Endothelial cell of umbilical vein (primary cell): ENCODE measurements at regions of chr18 and their contacts with region 1.

Region 1: GRCh38 chr18:59938676-59939075 is 38.9 kb downstream of the PMAIP1 start:
- DNase-seq: no peak
- H3K4me3 ChIP-seq: no peak overlapping the region
- H3K27ac ChIP-seq: no peak overlapping the region
- H3K4me1 ChIP-seq: no peaks in the 10 kb centered on the region
- H3K27me3 ChIP-seq: no peaks in the 10 kb centered on the region
- CTCF ChIP-seq: no peak
- POLR2A ChIP-seq: no peak

Region 2: DNA sequence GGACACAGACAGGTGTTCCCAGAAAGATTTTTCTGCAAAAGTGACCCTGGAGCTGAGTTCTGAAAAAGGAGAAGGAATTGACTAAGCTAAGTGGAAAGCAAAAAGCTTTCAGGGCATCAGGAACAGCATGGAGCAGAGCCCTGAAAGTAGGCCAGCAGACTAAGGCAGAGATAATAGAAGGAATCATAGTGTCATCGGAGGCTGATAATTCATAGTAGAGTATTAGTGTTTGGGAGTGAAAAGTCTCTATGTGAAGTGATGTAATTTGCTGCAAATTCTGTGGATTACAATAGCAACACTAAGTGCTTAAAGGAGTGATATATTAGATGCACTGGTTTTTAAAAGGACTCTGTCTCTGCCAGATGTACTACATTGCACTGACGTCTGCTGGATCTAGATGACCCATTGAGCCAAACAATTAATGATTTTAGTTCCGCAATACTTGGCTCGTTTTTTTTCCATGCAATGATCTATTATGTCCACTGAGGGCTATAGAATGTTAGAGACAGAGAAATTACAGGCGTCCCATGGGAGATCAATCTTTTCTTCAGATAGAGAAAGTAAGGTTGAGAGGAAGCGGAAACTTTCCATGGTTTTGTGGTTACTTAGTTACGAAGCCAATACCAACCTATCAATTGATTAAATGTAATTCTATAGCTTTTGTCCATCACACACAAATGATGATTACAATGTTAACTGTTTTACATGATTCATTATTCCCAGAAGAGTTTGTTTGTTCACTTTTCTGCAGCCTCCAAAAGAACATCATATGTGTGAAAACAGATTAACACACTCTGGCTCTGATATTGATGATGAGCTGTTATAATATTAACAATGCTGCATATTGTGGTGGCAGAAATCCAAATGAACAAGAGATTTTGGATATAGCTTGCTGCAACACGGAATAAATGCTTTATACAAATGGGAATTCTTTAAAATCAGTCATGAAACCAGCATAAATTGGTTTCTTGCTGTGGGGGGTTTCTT is 290.2 kb after region 1 on chr18:
- CTCF ChIA-PET with region 1: no interaction called
- POLR2A ChIA-PET with region 1: no interaction called
- dilution Hi-C with region 1: no loop called
- intact Hi-C with region 1: no loop called
- DNase-seq: no peak
- H3K4me3 ChIP-seq: no peak overlapping the region
- H3K27ac ChIP-seq: no peak overlapping the region
- H3K4me1 ChIP-seq: no peaks in the 10 kb centered on the region
- H3K27me3 ChIP-seq: no peaks in the 10 kb centered on the region
- CTCF ChIP-seq: no peak
- POLR2A ChIP-seq: no peak

Region 3: GRCh38 chr18:60656553-60656952 is 717.9 kb after region 1 on chr18:
- CTCF ChIA-PET with region 1: no interaction called
- POLR2A ChIA-PET with region 1: no interaction called
- dilution Hi-C with region 1: no loop called
- intact Hi-C with region 1: loop called (anchors 5 kb)
- DNase-seq: no peak
- H3K4me3 ChIP-seq: no peak overlapping the region
- H3K27ac ChIP-seq: no peak overlapping the region
- H3K4me1 ChIP-seq: no peaks in the 10 kb centered on the region
- H3K27me3 ChIP-seq: no peaks in the 10 kb centered on the region
- CTCF ChIP-seq: no peak
- POLR2A ChIP-seq: no peak